IMR-90 (cell line): ENCODE measurements at regions of chr5 and their contacts with region 1.

Region 1: GRCh38 chr5:98773464-98774191 is at the start of gene RGMB:
- DNase-seq: peak; percentile 99
- ATAC-seq: peak; percentile 85
- H3K4me3 ChIP-seq: peak within 1 kb of the TSS; percentile 81
- H3K27ac ChIP-seq: peak within 1 kb of the TSS; percentile 83
- H3K4me1 ChIP-seq: peaks cover 2% of the 10 kb centered on the region; the same call in 1 of the 2 replicates
- H3K27me3 ChIP-seq: no peaks in the 10 kb centered on the region
- CTCF ChIP-seq: no peak
- POLR2A ChIP-seq: peak; percentile 48
- RAD21 ChIP-seq: no peak
- total RNA-seq, gene RGMB: 74.4 and 83.0 TPM in 2 replicates

Region 2: DNA sequence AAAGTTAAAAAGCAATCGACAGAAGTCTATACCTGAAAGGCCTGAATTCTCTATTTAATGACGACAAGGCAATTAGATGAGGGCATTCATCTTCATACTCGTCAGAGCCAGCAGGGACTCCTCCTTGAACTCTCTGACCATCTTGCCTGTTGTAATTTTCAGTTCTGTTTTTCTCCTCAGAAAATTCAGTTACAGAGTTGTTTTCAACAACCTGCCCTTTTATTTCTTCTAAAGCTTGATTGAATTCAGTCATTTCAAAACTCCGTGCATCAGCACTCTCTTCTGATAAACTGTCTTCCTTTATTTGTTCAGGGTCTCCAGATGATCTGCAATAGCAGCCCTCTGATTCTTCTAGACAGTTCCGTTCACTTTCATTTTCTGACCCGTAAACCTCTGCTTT is 1606.2 kb before region 1 on chr5:
- CTCF ChIA-PET with region 1: no interaction called
- POLR2A ChIA-PET with region 1: no interaction called
- dilution Hi-C with region 1: no loop called
- in situ Hi-C with region 1: no loop called
- intact Hi-C with region 1: loop called (anchors 5 kb)
- DNase-seq: no peak
- ATAC-seq: no peak
- H3K4me3 ChIP-seq: no peak overlapping the region
- H3K27ac ChIP-seq: no peak overlapping the region
- H3K4me1 ChIP-seq: no peaks in the 10 kb centered on the region
- H3K27me3 ChIP-seq: no peaks in the 10 kb centered on the region
- CTCF ChIP-seq: no peak
- POLR2A ChIP-seq: no peak
- RAD21 ChIP-seq: no peak

Region 3: GRCh38 chr5:97297063-97297703 is 1476.4 kb before region 1 on chr5:
- CTCF ChIA-PET with region 1: no interaction called
- POLR2A ChIA-PET with region 1: no interaction called
- dilution Hi-C with region 1: no loop called
- in situ Hi-C with region 1: no loop called
- intact Hi-C with region 1: loop called (anchors 5 kb)
- DNase-seq: peak; percentile 23
- ATAC-seq: peak; percentile 62
- H3K4me3 ChIP-seq: no peak overlapping the region
- H3K27ac ChIP-seq: no peak overlapping the region
- H3K4me1 ChIP-seq: no peaks in the 10 kb centered on the region; the same call in 1 of the 2 replicates
- H3K27me3 ChIP-seq: no peaks in the 10 kb centered on the region
- CTCF ChIP-seq: peak; percentile 54
- POLR2A ChIP-seq: no peak
- RAD21 ChIP-seq: peak; percentile 59

Region 4: GRCh38 chr5:97534166-97534565 is 1239.5 kb before region 1 on chr5:
- CTCF ChIA-PET with region 1: interaction called, 4 read pairs
- POLR2A ChIA-PET with region 1: no interaction called
- dilution Hi-C with region 1: no loop called
- in situ Hi-C with region 1: loop called (anchors 25 kb)
- intact Hi-C with region 1: loop called (anchors 1 kb)
- DNase-seq: peak; percentile 94
- ATAC-seq: peak; percentile 98
- H3K4me3 ChIP-seq: no peak overlapping the region
- H3K27ac ChIP-seq: no peak overlapping the region
- H3K4me1 ChIP-seq: no peaks in the 10 kb centered on the region; the same call in 1 of the 2 replicates
- H3K27me3 ChIP-seq: peaks cover 12% of the 10 kb centered on the region
- CTCF ChIP-seq: peak; percentile 72
- POLR2A ChIP-seq: no peak
- RAD21 ChIP-seq: peak; percentile 73

Region 5: GRCh38 chr5:98209418-98209817 is 564.2 kb before region 1 on chr5:
- CTCF ChIA-PET with region 1: no interaction called
- POLR2A ChIA-PET with region 1: interaction called, 11 read pairs
- dilution Hi-C with region 1: no loop called
- in situ Hi-C with region 1: no loop called
- intact Hi-C with region 1: no loop called
- DNase-seq: no peak
- ATAC-seq: no peak
- H3K4me3 ChIP-seq: no peak overlapping the region
- H3K27ac ChIP-seq: no peak overlapping the region
- H3K4me1 ChIP-seq: 0 out of 2 replicates have a peak, but pooled peaks cover 3% of the 10 kb centered on the region
- H3K27me3 ChIP-seq: no peaks in the 10 kb centered on the region
- CTCF ChIP-seq: no peak
- POLR2A ChIP-seq: no peak
- RAD21 ChIP-seq: no peak

Region 6: DNA sequence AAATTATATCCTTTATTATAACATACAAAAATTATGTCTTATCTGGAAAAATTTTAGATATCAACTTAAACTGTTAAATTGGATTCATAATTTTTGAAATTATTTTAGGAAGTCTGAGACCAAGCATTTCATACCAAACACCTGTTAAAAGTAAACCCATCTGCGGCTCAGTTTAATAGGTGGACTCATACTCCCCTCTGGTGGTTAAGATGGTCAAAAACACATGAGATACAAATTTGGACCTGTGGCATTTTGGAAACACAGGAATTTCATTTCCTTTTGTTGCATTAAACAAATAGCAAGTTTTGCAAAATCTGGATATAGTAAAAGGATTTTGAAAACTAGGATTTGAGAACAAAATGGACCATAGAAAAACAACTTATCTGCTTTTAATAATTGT is 53.5 kb after region 1 on chr5:
- CTCF ChIA-PET with region 1: no interaction called
- POLR2A ChIA-PET with region 1: no interaction called
- dilution Hi-C with region 1: no loop called
- in situ Hi-C with region 1: no loop called
- intact Hi-C with region 1: loop called (anchors 2 kb)
- DNase-seq: peak; percentile 62
- ATAC-seq: peak; percentile 66
- H3K4me3 ChIP-seq: no peak overlapping the region
- H3K27ac ChIP-seq: no peak overlapping the region
- H3K4me1 ChIP-seq: no peaks in the 10 kb centered on the region
- H3K27me3 ChIP-seq: no peaks in the 10 kb centered on the region
- CTCF ChIP-seq: peak; percentile 67
- POLR2A ChIP-seq: no peak; the same call in 1 of the 2 replicates
- RAD21 ChIP-seq: peak; percentile 86

Region 7: DNA sequence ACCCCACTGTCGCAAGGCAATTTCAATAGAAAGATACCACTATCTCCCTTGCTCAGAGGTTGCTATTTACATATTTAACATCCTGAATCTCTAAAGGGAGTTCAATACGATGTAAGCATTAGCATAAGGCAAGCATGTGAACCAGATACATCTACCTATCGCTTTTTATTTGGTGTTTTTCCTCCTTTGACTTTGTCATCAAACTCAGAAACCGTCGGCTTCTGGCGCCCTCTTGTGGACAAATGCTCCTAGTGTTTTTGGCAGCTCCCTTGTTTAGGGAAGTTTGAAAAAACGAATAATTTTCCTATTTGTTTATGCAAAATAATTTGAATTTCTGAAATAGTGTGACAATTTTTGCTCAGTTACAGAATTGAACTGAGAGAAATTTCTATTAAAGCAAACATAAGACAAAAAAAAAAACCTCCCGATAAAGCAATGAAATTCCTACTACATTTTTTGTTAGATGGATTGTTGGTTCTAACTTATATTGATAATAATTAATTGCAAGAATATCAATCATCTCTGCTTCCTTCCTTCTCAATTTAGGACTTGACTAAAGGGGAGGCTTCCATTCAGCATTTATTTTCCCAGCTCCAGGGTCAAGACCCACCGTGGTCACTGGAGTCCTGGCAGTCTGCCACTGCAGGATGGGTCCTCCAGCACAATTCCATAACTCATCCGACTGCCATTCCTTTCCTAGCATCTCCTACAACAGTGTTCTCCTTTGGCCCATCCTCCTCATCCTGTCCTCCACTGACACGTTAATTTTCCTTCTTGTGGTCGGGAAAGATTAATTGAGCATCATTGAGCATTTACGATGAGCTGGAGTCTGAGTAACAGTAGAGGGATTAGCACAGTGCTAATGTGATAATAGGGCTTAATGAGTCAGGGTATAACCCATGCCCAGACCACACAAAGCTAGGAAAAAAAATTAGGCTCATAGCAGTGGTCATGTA is 287.0 kb after region 1 on chr5:
- CTCF ChIA-PET with region 1: no interaction called
- POLR2A ChIA-PET with region 1: no interaction called
- dilution Hi-C with region 1: no loop called
- in situ Hi-C with region 1: no loop called
- intact Hi-C with region 1: no loop called
- DNase-seq: peak; percentile 65
- ATAC-seq: 0 out of 2 replicates have a peak, but pooled peaks have one; percentile 30
- H3K4me3 ChIP-seq: no peak overlapping the region
- H3K27ac ChIP-seq: no peak overlapping the region
- H3K4me1 ChIP-seq: peaks cover 7% of the 10 kb centered on the region
- H3K27me3 ChIP-seq: no peaks in the 10 kb centered on the region; the same call in 1 of the 2 replicates
- CTCF ChIP-seq: peak; percentile 85
- POLR2A ChIP-seq: no peak
- RAD21 ChIP-seq: peak; percentile 73

Region 8: GRCh38 chr5:99543841-99544240 is 770.2 kb after region 1 on chr5:
- CTCF ChIA-PET with region 1: no interaction called
- POLR2A ChIA-PET with region 1: no interaction called
- dilution Hi-C with region 1: no loop called
- in situ Hi-C with region 1: no loop called
- intact Hi-C with region 1: no loop called
- DNase-seq: no peak
- ATAC-seq: no peak
- H3K4me3 ChIP-seq: no peak overlapping the region
- H3K27ac ChIP-seq: no peak overlapping the region
- H3K4me1 ChIP-seq: no peaks in the 10 kb centered on the region
- H3K27me3 ChIP-seq: no peaks in the 10 kb centered on the region
- CTCF ChIP-seq: no peak
- POLR2A ChIP-seq: no peak
- RAD21 ChIP-seq: no peak